ENCODE measurements at regions of chr6 and their contacts with region 1.

Region 1: GRCh38 chr6:31920811-31921210 is 6.7 kb upstream of the C2 start:
- DNase-seq: peak in 1 of 2 experiments; percentile 51
- H3K4me3 ChIP-seq: no peak overlapping the region
- H3K4me3 Mint-ChIP-seq: no peak overlapping the region
- H3K27ac Mint-ChIP-seq: no peak overlapping the region
- H3K4me1 ChIP-seq: peaks cover 15% of the 10 kb centered on the region
- H3K4me1 Mint-ChIP-seq: peaks cover 20% of the 10 kb centered on the region
- H3K27me3 ChIP-seq: no peaks in the 10 kb centered on the region
- H3K27me3 Mint-ChIP-seq: no peaks in the 10 kb centered on the region
- CTCF ChIP-seq: no peak

Region 2: DNA sequence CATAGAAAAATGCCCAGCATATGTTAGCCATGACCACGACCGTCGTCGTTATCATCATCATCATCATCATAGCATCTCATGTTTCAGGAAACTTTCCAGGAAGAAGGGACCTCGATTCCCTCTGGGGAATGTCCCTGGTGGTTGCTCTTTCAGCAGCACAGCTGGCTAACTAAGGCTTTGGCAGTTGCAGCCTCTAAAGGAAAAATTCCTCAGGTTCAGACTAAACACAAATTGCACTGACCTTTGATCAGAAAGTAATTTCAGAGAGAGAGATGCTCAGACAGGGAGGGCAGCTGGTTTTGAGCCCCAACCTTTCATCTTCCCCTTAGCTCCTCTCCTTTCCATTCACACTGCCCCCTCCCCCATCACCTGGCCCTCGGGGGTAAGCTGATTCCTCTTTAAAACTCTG is 19.4 kb after region 1 on chr6:
- CTCF ChIA-PET with region 1: interaction called, 4 read pairs
- POLR2A ChIA-PET with region 1: interaction called, 4 read pairs
- intact Hi-C with region 1: loop called (anchors 2 kb)
- DNase-seq: peak; percentile 66 to 73
- H3K4me3 ChIP-seq: no peak overlapping the region
- H3K4me3 Mint-ChIP-seq: peak overlapping the region; percentile 42
- H3K27ac Mint-ChIP-seq: peak overlapping the region; percentile 89
- H3K4me1 ChIP-seq: peaks cover 28% of the 10 kb centered on the region
- H3K4me1 Mint-ChIP-seq: peaks cover 26% of the 10 kb centered on the region
- H3K27me3 ChIP-seq: no peaks in the 10 kb centered on the region
- H3K27me3 Mint-ChIP-seq: no peaks in the 10 kb centered on the region
- CTCF ChIP-seq: peak; percentile 8

Region 3: GRCh38 chr6:32337186-32337805 is 416.5 kb after region 1 on chr6:
- CTCF ChIA-PET with region 1: no interaction called
- POLR2A ChIA-PET with region 1: no interaction called
- intact Hi-C with region 1: no loop called
- DNase-seq: no peak
- H3K4me3 ChIP-seq: no peak overlapping the region
- H3K4me3 Mint-ChIP-seq: no peak overlapping the region
- H3K27ac Mint-ChIP-seq: no peak overlapping the region
- H3K4me1 ChIP-seq: peaks cover 3% of the 10 kb centered on the region
- H3K4me1 Mint-ChIP-seq: peaks cover 6% of the 10 kb centered on the region
- H3K27me3 ChIP-seq: no peaks in the 10 kb centered on the region
- H3K27me3 Mint-ChIP-seq: no peaks in the 10 kb centered on the region
- CTCF ChIP-seq: no peak